Endothelial cell of umbilical vein (primary cell): ENCODE measurements at regions of chr2 and their contacts with region 1.

Region 1: DNA sequence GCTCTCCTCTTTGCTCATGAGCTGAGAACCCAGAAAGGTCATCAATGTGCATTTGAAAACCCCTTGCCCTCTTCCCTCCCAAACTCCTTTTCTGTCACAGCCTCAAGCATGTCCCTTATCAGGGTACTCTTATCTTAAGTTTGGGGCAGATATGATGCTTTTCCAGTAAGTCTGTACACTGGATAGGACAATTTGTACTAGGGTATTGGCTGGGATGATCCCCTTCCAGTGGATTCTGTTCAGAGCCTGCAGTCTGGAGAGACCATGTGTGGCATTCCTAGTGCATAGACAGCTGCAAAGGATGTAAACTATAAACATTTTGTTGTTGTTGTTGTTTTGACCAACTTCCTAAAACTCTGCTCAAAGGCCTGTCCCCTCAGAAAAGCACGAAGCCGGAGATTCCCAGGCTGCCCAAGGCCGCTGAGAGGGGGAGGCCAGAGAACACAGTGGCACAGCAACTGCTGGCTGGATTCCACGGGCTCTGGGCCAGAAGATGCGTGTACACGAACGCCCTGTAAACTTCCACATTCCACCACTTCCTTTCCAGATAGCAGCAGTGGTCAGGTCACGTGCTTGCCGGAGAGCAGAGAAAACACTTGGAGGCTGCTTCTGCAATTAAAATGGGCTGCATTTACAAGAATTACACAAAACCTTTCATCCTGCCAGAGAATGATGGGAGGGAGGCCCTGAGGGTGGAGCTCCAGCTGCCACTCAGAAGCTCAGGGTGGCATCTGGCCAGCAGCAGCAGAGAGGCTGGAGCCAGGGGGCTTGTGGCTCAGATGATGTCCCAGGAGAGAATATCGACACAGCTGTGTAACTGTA is 42.1 kb downstream of the BMP10 start:
- DNase-seq: peak; percentile 99
- H3K4me3 ChIP-seq: no peak overlapping the region
- H3K27ac ChIP-seq: peak overlapping the region; percentile 70
- H3K4me1 ChIP-seq: peaks cover 43% of the 10 kb centered on the region
- H3K27me3 ChIP-seq: no peaks in the 10 kb centered on the region
- CTCF ChIP-seq: no peak
- POLR2A ChIP-seq: no peak

Region 2: DNA sequence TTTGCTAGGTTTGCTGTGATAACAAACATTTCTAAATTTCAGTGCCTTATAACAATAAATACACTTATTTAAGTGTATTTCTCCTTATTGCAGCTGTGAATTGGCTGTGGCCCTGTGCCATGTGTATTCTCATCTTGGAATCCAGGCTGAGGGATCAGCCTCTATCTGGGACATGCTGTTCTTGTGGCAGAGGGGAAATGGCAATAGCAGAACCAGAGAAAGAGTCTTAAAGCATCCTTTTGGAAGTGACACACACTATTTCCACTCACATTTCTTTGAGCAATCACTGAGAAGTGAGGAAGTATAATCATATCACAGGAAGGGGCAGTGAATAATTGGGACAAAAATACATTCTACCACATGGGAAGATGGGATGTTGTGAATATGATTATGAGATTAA is 251.9 kb before region 1 on chr2:
- CTCF ChIA-PET with region 1: no interaction called
- POLR2A ChIA-PET with region 1: no interaction called
- dilution Hi-C with region 1: no loop called
- intact Hi-C with region 1: no loop called
- DNase-seq: no peak
- H3K4me3 ChIP-seq: no peak overlapping the region
- H3K27ac ChIP-seq: no peak overlapping the region
- H3K4me1 ChIP-seq: peaks cover 3% of the 10 kb centered on the region
- H3K27me3 ChIP-seq: no peaks in the 10 kb centered on the region
- CTCF ChIP-seq: no peak
- POLR2A ChIP-seq: no peak

Region 3: DNA sequence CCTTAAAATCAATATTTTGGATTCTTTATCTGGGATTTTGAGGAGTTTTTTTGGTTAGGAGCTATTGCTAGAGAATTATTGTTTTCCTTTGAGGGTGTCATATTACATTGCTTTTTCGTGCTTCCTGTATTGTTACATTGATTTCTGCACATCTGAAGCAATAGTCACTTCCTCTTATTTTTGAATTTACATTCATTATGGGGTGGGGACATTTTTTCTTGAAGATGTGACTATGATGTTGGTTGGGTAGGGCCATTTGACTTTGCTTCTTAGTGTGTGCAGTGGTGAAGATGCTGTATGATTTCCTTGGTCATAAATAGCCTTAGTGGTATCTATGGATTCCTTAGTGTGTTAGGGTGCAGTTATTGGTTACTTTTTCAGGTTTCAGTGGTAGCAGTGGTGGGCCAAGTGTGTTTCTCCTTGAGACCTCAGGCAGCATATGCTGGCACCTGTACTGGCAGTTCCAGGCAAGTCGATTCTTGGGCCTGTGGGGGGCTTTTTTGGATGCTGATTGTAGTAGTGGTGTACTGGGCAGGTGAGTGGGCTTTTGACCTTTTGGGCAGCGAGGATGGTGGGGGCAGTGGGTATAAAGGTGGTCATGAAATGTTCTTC is 32.7 kb before region 1 on chr2:
- CTCF ChIA-PET with region 1: no interaction called
- POLR2A ChIA-PET with region 1: no interaction called
- dilution Hi-C with region 1: no loop called
- intact Hi-C with region 1: loop called (anchors 5 kb)
- DNase-seq: peak; percentile 35
- H3K4me3 ChIP-seq: no peak overlapping the region
- H3K27ac ChIP-seq: no peak overlapping the region
- H3K4me1 ChIP-seq: peaks cover 15% of the 10 kb centered on the region
- H3K27me3 ChIP-seq: peaks cover 2 to 3% of the 10 kb centered on the region in 2 experiments
- CTCF ChIP-seq: no peak
- POLR2A ChIP-seq: no peak

Region 4: GRCh38 chr2:68849579-68850030 is 20.5 kb after region 1 on chr2:
- CTCF ChIA-PET with region 1: interaction called, 4 read pairs
- POLR2A ChIA-PET with region 1: no interaction called
- dilution Hi-C with region 1: no loop called
- intact Hi-C with region 1: loop called (anchors 1 kb)
- DNase-seq: peak; percentile 84
- H3K4me3 ChIP-seq: no peak overlapping the region
- H3K27ac ChIP-seq: peak overlapping the region; percentile 88
- H3K4me1 ChIP-seq: peaks cover 24% of the 10 kb centered on the region
- H3K27me3 ChIP-seq: no peaks in the 10 kb centered on the region
- CTCF ChIP-seq: no peak
- POLR2A ChIP-seq: peak; percentile 45

Region 5: GRCh38 chr2:68878753-68879152 is 49.7 kb after region 1 on chr2:
- CTCF ChIA-PET with region 1: no interaction called
- POLR2A ChIA-PET with region 1: no interaction called
- dilution Hi-C with region 1: no loop called
- intact Hi-C with region 1: loop called (anchors 2 kb)
- DNase-seq: peak; percentile 49
- H3K4me3 ChIP-seq: no peak overlapping the region
- H3K27ac ChIP-seq: peak overlapping the region; percentile 78
- H3K4me1 ChIP-seq: peaks cover 33% of the 10 kb centered on the region
- H3K27me3 ChIP-seq: no peaks in the 10 kb centered on the region
- CTCF ChIP-seq: no peak
- POLR2A ChIP-seq: peak; percentile 5

Region 6: DNA sequence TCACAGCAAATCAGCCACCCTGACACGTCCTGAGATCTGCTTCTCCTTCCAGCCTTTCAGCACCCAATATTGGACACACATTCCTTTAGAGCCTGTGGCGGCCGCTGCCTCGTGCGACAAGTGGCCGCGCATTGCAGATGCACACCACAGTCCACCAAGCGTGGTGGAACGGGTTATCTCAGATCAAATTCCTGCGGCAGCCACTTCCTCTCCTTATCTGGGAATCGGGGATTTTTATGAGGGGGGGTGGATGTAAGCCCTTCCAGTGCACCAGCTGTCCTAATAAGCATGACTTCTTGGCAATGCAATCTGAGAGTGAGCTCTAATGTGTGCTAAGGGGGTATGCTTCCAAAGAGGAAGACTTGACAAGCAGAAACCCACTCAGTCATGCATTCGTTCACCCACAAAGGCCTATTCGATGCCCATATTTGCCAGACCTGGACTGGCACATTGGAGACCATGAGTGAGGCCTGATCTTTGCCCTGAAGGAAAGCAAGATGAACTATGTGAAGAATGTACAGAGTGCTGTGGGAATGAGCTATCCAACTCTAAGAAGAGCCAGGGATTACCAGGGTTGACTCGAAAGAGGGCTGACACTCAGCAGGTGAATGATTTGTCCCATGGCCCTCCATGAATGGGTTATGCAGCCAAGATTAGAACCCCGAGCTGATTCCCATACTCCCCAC is 60.5 kb after region 1 on chr2:
- CTCF ChIA-PET with region 1: no interaction called
- POLR2A ChIA-PET with region 1: no interaction called
- dilution Hi-C with region 1: no loop called
- intact Hi-C with region 1: no loop called
- DNase-seq: no peak
- H3K4me3 ChIP-seq: no peak overlapping the region
- H3K27ac ChIP-seq: no peak overlapping the region
- H3K4me1 ChIP-seq: peaks cover 6% of the 10 kb centered on the region
- H3K27me3 ChIP-seq: no peaks in the 10 kb centered on the region
- CTCF ChIP-seq: no peak
- POLR2A ChIP-seq: no peak

Region 7: DNA sequence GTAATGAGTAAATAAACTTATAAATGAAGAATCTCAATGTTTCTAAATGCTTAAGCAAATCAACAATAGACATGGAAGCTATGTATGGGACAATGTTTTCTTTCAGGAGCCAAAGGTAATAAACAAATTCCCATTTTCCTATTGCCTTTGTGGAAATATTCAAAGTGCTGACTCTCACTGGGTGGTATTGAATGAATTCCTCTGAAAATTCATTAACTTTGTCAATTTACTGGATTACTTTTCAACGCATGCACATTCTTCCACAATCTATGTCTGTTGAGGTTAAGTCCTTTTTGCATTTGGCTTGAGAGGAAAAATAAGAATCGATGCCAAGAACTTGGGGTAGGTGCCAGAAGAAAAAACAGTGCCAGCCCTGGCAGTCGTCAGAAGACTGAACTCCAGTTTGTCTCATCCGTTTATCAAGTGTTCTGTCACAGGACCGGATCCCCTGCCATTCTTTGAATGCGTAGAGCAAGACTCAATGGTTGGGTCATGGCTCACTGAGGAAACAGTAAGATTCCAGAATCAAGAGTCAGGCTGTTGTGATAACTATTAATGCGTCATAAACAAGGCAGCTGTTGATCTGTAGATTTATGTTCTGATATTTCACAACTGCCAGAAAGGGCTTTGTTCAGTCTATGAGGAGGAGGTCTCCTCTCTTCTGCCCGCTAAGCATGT is 424.7 kb after region 1 on chr2:
- CTCF ChIA-PET with region 1: no interaction called
- POLR2A ChIA-PET with region 1: no interaction called
- dilution Hi-C with region 1: no loop called
- intact Hi-C with region 1: loop called (anchors 1 kb)
- DNase-seq: peak; percentile 97
- H3K4me3 ChIP-seq: no peak overlapping the region
- H3K27ac ChIP-seq: peak overlapping the region; percentile 96
- H3K4me1 ChIP-seq: peaks cover 30% of the 10 kb centered on the region
- H3K27me3 ChIP-seq: no peaks in the 10 kb centered on the region
- CTCF ChIP-seq: no peak
- POLR2A ChIP-seq: peak; percentile 84